GM12878 (cell line): ENCODE measurements at regions of chr6 and their contacts with region 1.

Region 1: DNA sequence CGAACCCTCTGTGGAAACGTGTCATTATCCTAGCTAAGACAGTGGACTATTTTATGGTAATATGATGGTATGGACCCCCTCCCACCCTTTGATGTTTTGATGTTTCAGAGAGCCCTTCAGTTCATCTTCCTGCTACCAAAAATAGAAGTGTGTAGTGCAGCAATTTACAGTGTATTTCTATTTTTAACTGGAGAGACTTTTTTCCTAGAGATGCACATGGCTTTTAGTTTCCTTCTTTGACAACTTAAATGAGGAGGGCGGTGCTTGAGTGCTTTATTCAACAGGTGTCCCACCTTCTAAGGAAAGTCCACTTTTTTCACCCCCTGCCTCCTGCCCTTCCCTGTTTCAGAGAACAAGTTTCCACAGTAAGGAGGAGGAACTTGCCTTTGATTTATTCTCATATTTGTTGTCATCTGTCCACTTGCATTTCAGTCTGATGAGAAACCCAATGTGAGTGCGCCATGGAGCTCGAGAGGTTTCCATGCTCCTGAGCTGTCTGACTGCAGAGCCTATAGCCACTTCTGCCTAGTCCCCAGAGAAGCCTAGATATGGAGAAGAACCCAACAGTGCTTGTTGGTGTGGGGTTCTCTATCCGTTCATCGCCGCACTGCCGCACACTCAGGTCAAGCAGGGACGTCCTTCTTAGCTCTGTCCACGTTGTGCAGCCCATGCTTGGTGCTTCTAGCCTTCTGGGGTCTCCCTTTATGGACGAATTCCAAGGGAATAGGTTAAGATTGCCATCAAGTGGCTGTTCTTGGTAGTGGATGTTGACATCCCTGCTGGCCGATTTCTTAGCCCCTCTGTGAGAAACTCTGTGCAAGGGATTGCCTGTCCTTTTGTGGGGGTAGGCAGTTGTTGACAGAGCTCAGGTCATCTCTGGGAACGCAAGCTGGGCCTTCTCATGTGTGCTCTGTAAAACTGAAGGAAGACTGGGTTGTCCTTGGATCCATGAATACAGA is 144.2 kb downstream of the JARID2 start:
- DNase-seq: peak; percentile 52
- ATAC-seq: peak; percentile 56
- H3K4me3 ChIP-seq: no peak overlapping the region
- H3K27ac ChIP-seq: peak overlapping the region; percentile 40
- H3K4me1 ChIP-seq: peaks cover 56% of the 10 kb centered on the region
- H3K27me3 ChIP-seq: no peaks in the 10 kb centered on the region
- CTCF ChIP-seq: peak; percentile 65 to 69 (median 68)
- EP300 ChIP-seq: no peak
- POLR2A ChIP-seq: no peak
- RAD21 ChIP-seq: peak; percentile 87

Region 2: GRCh38 chr6:14865531-14866100 is 524.4 kb before region 1 on chr6:
- CTCF ChIA-PET with region 1: no interaction called
- POLR2A ChIA-PET with region 1: no interaction called
- RAD21 ChIA-PET with region 1: no interaction called
- SMC1A ChIA-PET with region 1: no interaction called
- in situ Hi-C with region 1: no loop called
- intact Hi-C with region 1: no loop called
- DNase-seq: no peak
- ATAC-seq: peak; percentile 90
- H3K4me3 ChIP-seq: no peak overlapping the region
- H3K27ac ChIP-seq: no peak overlapping the region
- H3K4me1 ChIP-seq: peaks cover 6% of the 10 kb centered on the region; the same call in 1 of the 2 replicates
- H3K27me3 ChIP-seq: no peaks in the 10 kb centered on the region
- CTCF ChIP-seq: no peak
- EP300 ChIP-seq: no peak
- POLR2A ChIP-seq: no peak
- RAD21 ChIP-seq: no peak

Region 3: DNA sequence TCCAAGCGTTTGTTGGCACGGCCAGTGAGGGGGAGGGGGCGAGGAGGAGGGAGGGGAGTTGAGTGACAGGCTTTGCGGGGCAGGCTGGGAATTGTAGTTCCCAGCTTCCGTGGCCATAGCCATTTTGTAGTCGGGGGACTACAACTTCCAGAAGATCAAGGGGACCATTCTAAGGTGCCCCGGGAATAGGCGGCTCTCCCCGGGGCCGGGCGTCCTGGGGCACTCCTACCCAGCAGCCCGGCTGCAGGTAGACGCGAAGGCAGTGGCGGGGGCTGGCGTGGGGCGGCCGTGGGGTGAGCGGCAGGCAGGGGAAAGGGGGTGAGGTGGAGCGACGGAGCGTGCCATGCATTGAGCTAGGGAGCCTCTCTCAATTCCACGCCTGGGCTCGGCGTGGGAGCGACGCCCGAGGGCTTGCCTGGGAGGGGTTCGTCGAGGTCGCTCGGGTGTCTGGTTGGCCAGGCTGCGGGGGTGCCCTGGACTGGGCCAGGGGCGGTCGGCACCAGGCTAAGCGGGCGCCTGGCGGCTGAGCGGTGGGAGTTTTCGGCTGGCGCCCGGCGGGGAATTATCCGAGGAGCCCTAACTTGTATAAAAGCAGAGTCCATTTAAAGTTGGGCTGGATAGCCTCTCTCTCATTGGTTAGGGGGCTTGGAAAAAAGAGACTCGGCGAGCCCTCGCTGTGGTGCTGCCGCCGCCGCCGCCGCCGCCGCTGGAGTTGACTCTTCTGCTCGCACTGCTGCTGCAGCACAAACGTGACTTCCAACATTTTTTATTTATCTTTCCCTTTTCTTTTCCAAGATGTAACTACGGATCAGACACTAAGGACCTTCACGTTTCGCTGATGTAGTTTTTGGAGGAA is 144.5 kb before region 1 on chr6 and contains the start of gene JARID2:
- CTCF ChIA-PET with region 1: interaction called, 16 read pairs
- POLR2A ChIA-PET with region 1: interaction called, 5 read pairs
- RAD21 ChIA-PET with region 1: interaction called, 17 read pairs
- SMC1A ChIA-PET with region 1: interaction called, 17 read pairs
- in situ Hi-C with region 1: loop called (anchors 5 kb)
- intact Hi-C with region 1: loop called (anchors 1 kb)
- DNase-seq: peak; percentile 91
- ATAC-seq: peak; percentile 72
- H3K4me3 ChIP-seq: peak within 1 kb of the TSS; percentile 97
- H3K27ac ChIP-seq: peak within 1 kb of the TSS; percentile 97
- H3K4me1 ChIP-seq: peaks cover under 1% of the 10 kb centered on the region; the same call in 1 of the 2 replicates
- H3K27me3 ChIP-seq: no peaks in the 10 kb centered on the region
- CTCF ChIP-seq: no peak
- EP300 ChIP-seq: 0 out of 4 replicates have a peak, but pooled peaks of 1 of the 2 experiments have one; percentile 14
- POLR2A ChIP-seq: peak; percentile 57; the same call in 1 of the 2 replicates
- RAD21 ChIP-seq: no peak
- polyA plus RNA-seq, gene JARID2: 4.2 to 5.2 TPM

Region 4: DNA sequence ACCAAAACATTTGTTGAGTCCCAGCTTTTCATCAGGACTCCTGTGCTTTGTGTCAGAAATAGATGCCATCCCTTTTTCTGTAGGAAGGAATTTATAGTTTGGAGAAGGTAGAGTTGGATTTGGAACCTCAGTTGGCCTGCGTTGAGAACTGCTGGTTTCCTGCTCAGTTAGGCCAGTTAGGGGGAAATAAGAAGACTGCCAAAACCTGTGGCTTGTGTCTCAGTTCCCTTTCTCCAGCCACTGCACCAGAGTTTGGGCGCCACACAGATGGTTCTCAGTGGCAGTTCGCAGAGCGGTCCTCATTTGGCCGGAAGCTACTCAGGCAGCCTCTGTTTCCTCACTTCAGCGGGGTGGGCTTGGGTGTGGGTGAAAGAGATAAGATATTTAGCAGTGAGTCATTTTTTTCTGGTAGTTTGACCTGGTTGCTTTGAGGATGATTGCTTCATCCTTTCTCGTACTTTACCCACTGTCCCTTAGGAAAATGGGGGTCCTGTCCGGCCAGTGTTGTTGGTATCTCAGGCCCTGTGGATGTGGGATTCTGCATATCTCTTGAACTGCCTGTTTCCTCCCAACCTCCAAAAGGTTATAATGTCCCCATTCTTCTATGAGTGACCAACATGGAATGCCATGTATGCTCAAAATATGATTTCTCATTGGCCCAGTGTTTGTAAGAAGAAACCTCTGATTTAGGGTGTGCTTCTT is 90.5 kb before region 1 on chr6:
- CTCF ChIA-PET with region 1: interaction called, 4 read pairs
- POLR2A ChIA-PET with region 1: no interaction called
- RAD21 ChIA-PET with region 1: interaction called, 11 read pairs
- SMC1A ChIA-PET with region 1: interaction called, 13 read pairs
- in situ Hi-C with region 1: no loop called
- intact Hi-C with region 1: no loop called
- DNase-seq: peak; percentile 90
- ATAC-seq: peak; percentile 88
- H3K4me3 ChIP-seq: peak overlapping the region; percentile 50; the same call in 1 of the 2 replicates
- H3K27ac ChIP-seq: peak overlapping the region; percentile 80
- H3K4me1 ChIP-seq: peaks cover 79% of the 10 kb centered on the region
- H3K27me3 ChIP-seq: no peaks in the 10 kb centered on the region
- CTCF ChIP-seq: no peak
- EP300 ChIP-seq: peak; percentile 59 to 84; a peak in 3 of 4 replicates
- POLR2A ChIP-seq: peak; percentile 47; the same call in 1 of the 2 replicates
- RAD21 ChIP-seq: no peak

Region 5: DNA sequence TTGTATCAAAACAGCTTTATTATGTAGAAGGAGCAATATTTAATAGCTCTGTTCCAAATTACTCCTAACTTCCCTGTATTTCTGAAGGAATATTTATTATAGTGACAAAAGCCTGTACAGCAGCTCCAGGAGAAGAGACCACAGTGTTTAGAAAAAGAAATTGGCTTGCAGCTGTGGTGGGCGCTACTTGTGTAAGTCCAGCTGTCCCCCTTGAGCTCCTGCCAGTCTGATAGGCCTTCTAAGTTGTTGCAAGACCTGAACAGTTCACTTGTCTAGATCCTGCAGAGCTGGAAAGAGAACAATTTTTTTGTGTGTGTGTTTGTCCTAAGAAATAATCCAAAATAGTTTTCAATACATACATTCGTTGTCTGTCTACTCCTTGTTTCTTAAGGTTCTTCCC is 57.6 kb before region 1 on chr6:
- CTCF ChIA-PET with region 1: interaction called, 146 read pairs
- POLR2A ChIA-PET with region 1: interaction called, 3 read pairs
- RAD21 ChIA-PET with region 1: interaction called, 75 read pairs
- SMC1A ChIA-PET with region 1: interaction called, 123 read pairs
- in situ Hi-C with region 1: no loop called
- intact Hi-C with region 1: loop called (anchors 2 kb)
- DNase-seq: no peak
- ATAC-seq: no peak
- H3K4me3 ChIP-seq: no peak overlapping the region
- H3K27ac ChIP-seq: peak overlapping the region; percentile 74; the same call in 1 of the 2 replicates
- H3K4me1 ChIP-seq: peaks cover 69% of the 10 kb centered on the region
- H3K27me3 ChIP-seq: no peaks in the 10 kb centered on the region
- CTCF ChIP-seq: no peak
- EP300 ChIP-seq: no peak
- POLR2A ChIP-seq: no peak
- RAD21 ChIP-seq: no peak

Region 6: DNA sequence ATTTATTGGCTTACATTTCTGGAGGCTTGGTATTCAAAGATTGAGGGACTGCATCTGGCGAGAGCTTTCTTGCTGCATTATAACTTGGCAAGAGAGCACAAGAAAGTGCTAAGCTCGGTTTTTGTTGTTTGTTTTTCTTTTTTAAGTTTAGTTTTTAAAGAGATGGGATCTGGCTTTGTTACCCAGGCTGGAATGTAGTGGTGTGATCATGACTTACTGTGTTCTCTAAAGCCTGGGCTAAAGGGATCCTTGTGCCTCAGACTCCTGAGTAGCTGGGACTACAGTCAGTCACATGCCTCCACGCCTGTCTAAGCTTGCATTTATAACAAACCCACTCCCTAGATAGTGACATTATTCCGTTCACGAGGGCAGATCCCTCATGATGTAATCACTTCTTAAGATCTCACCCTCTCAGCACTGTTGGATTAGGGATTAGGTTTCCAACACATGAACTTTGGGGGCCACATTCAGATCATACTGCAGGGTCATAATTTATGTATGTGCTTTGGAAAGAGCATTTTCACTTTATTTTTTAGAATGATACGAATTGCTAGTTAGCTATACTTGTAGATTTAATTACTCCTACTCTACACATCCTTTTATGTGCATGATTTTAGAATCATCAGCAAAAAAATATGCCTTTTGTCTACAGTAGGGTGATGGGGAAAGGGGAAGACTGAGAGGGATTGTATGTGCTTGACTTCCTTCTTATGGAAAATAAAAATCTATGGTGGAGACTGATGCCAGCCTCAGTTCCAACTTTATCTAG is 23.6 kb after region 1 on chr6:
- CTCF ChIA-PET with region 1: interaction called, 5 read pairs
- POLR2A ChIA-PET with region 1: interaction called, 10 read pairs
- RAD21 ChIA-PET with region 1: interaction called, 4 read pairs
- SMC1A ChIA-PET with region 1: interaction called, 22 read pairs
- in situ Hi-C with region 1: no loop called
- intact Hi-C with region 1: no loop called
- DNase-seq: no peak
- ATAC-seq: no peak
- H3K4me3 ChIP-seq: no peak overlapping the region
- H3K27ac ChIP-seq: no peak overlapping the region
- H3K4me1 ChIP-seq: peaks cover 24% of the 10 kb centered on the region
- H3K27me3 ChIP-seq: no peaks in the 10 kb centered on the region
- CTCF ChIP-seq: no peak
- EP300 ChIP-seq: no peak
- POLR2A ChIP-seq: no peak
- RAD21 ChIP-seq: no peak

Region 7: GRCh38 chr6:15458021-15458459 is 68.0 kb after region 1 on chr6:
- CTCF ChIA-PET with region 1: interaction called, 7 read pairs
- POLR2A ChIA-PET with region 1: interaction called, 3 read pairs
- RAD21 ChIA-PET with region 1: interaction called, 4 read pairs
- SMC1A ChIA-PET with region 1: interaction called, 20 read pairs
- in situ Hi-C with region 1: no loop called
- intact Hi-C with region 1: no loop called
- DNase-seq: peak; percentile 40
- ATAC-seq: peak; percentile 95
- H3K4me3 ChIP-seq: peak overlapping the region; percentile 9; the same call in 1 of the 2 replicates
- H3K27ac ChIP-seq: peak overlapping the region; percentile 37
- H3K4me1 ChIP-seq: peaks cover 17% of the 10 kb centered on the region
- H3K27me3 ChIP-seq: no peaks in the 10 kb centered on the region
- CTCF ChIP-seq: no peak
- EP300 ChIP-seq: 0 out of 4 replicates have a peak, but pooled peaks of 1 of the 2 experiments have one; percentile 35
- POLR2A ChIP-seq: no peak
- RAD21 ChIP-seq: no peak